ENCODE measurements at regions of chr2 and their contacts with region 1.

Region 1: GRCh38 chr2:69565431-69565839 is 78.1 kb downstream of the AAK1 start:
- DNase-seq: peak; percentile 56 to 86
- H3K4me3 ChIP-seq: no peak overlapping the region
- H3K4me1 ChIP-seq: no peaks in the 10 kb centered on the region
- H3K27me3 ChIP-seq: no peaks in the 10 kb centered on the region

Region 2: DNA sequence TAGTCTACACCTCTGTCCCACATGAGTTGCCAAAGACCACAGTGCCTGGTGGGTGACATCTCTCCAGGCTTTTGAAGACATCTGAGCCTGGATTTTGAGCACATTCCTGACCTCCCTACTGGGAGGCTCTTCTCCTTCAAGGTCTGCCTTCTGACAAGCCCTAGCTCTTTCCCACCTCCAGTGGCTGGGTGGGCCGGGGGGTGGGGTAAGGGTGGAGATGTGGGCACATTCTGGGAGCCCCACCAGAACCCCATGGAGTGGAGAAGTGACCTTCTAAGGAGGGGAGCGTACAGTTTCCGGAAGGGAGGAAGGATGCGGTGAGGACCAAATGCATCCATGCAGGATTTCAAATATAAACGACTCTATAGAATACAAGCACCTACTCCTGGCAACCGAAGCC is 148.6 kb after region 1 on chr2:
- in situ Hi-C with region 1: loop called (anchors 5 kb)
- DNase-seq: no peak
- H3K4me3 ChIP-seq: no peak overlapping the region
- H3K4me1 ChIP-seq: no peaks in the 10 kb centered on the region
- H3K27me3 ChIP-seq: no peaks in the 10 kb centered on the region